Calu3 (cell line): ENCODE measurements at regions of chr15 and their contacts with region 1.

Region 1: DNA sequence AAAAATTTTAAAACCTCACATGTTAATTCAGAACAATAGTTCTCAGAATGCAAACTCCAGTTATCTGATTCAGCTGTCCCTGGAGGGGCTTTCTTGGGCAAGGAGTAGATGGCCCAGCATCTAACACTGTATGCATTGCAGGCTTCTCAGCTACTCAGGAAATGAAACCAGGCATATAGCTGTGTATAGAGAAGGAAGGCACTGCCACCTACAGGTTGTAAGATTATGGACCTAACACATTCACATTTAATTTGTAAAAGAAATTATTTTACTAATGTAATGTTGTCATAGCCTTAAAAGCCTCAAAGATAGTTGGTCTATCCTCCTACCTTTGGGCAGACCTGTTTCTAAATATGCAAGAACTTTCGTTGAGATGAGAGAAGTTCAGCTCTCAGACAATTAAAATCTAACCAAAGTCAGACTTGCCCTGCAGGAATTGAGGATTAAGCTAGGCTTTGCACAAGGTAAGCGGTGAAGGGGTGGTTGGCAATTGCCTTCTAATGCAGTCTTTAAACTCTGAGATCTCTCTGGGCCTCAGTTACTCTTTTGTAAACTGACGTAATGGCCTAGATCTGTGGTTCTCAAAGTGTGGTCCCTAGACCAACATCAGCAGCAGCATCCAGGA is 132.8 kb upstream of the SLC24A5 start:
- DNase-seq: peak; percentile 30
- H3K4me3 Mint-ChIP-seq: no peak overlapping the region
- H3K27ac Mint-ChIP-seq: no peak overlapping the region
- H3K4me1 Mint-ChIP-seq: no peaks in the 10 kb centered on the region
- H3K27me3 Mint-ChIP-seq: no peaks in the 10 kb centered on the region
- CTCF ChIP-seq: no peak

Region 2: DNA sequence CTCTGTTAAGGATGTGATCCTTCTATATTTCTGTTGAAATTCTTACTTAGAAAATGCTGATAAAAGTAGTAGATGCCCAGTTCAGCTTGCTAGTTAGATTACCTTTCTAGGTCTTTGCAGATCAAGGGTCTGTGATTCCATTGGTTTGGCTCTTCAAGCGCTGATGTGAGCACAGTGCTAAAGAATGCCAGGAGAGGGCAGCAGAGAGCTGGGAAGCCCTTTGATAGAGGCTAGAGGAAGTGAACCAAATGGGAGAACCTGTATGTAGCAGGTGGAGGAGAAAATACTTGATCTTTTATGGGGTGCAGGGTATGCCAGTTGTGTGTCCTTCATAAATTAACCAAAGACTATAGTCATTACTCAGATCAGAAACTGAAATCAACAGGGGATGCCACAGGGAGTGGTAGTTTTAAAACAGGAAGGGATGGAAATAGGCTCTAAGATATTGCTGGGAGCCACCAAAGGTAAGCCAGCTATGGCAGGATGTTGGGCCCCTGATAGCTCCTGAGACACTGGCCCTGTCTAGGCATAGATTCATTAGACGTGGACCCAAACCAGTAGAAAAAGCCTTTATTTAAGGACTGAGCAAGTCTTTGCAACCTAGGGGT is 1675.8 kb before region 1 on chr15:
- CTCF ChIA-PET with region 1: no interaction called
- intact Hi-C with region 1: loop called (anchors 5 kb)
- DNase-seq: peak; percentile 76
- H3K4me3 Mint-ChIP-seq: no peak overlapping the region
- H3K27ac Mint-ChIP-seq: no peak overlapping the region
- H3K4me1 Mint-ChIP-seq: no peaks in the 10 kb centered on the region
- H3K27me3 Mint-ChIP-seq: no peaks in the 10 kb centered on the region
- CTCF ChIP-seq: peak; percentile 47

Region 3: DNA sequence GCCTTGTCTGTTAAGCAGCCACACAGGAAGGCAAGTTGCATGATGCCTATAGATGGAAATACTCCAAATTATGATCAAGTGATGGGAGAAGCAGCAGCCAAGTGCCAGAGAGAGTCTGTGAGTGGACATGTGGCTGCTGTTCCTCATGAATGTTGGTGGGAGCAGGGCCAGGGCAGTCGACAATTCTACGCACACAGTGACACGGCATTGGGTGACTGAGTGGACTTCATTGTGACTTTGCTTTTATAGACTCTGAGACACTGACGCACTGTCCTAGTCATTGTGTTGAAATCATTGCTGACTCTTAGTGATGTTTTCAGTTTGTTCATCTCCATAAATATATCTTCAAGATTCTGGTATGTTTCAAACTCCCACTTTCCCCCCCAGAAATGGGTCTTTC is 517.0 kb before region 1 on chr15:
- CTCF ChIA-PET with region 1: no interaction called
- intact Hi-C with region 1: loop called (anchors 1 kb)
- DNase-seq: no peak
- H3K4me3 Mint-ChIP-seq: no peak overlapping the region
- H3K27ac Mint-ChIP-seq: no peak overlapping the region
- H3K4me1 Mint-ChIP-seq: no peaks in the 10 kb centered on the region
- H3K27me3 Mint-ChIP-seq: no peaks in the 10 kb centered on the region
- CTCF ChIP-seq: no peak

Region 4: GRCh38 chr15:47711654-47712053 is 276.4 kb before region 1 on chr15:
- CTCF ChIA-PET with region 1: interaction called, 7 read pairs
- intact Hi-C with region 1: loop called (anchors 1 kb)
- DNase-seq: no peak
- H3K4me3 Mint-ChIP-seq: no peak overlapping the region
- H3K27ac Mint-ChIP-seq: no peak overlapping the region
- H3K4me1 Mint-ChIP-seq: no peaks in the 10 kb centered on the region
- H3K27me3 Mint-ChIP-seq: no peaks in the 10 kb centered on the region
- CTCF ChIP-seq: no peak